HEK293 (cell line): ENCODE measurements at regions of chr16 and their contacts with region 1.

Region 1: GRCh38 chr16:1181404-1182315 is 28.8 kb downstream of the CACNA1H start:
- H3K4me3 ChIP-seq: no peak overlapping the region
- H3K27ac ChIP-seq: no peak overlapping the region
- H3K4me1 ChIP-seq: peaks cover 3% of the 10 kb centered on the region; the same call in 1 of the 2 replicates
- CTCF ChIP-seq: peak; percentile 51; the same call in 1 of the 2 replicates

Region 2: GRCh38 chr16:1158128-1158800 is 23.4 kb before region 1 on chr16:
- CTCF ChIA-PET with region 1: interaction called, 11 read pairs
- POLR2A ChIA-PET with region 1: interaction called, 4 read pairs
- H3K4me3 ChIP-seq: no peak overlapping the region
- H3K27ac ChIP-seq: no peak overlapping the region
- H3K4me1 ChIP-seq: no peaks in the 10 kb centered on the region
- CTCF ChIP-seq: no peak